ENCODE measurements at regions of chrX and their contacts with region 1.

Region 1: DNA sequence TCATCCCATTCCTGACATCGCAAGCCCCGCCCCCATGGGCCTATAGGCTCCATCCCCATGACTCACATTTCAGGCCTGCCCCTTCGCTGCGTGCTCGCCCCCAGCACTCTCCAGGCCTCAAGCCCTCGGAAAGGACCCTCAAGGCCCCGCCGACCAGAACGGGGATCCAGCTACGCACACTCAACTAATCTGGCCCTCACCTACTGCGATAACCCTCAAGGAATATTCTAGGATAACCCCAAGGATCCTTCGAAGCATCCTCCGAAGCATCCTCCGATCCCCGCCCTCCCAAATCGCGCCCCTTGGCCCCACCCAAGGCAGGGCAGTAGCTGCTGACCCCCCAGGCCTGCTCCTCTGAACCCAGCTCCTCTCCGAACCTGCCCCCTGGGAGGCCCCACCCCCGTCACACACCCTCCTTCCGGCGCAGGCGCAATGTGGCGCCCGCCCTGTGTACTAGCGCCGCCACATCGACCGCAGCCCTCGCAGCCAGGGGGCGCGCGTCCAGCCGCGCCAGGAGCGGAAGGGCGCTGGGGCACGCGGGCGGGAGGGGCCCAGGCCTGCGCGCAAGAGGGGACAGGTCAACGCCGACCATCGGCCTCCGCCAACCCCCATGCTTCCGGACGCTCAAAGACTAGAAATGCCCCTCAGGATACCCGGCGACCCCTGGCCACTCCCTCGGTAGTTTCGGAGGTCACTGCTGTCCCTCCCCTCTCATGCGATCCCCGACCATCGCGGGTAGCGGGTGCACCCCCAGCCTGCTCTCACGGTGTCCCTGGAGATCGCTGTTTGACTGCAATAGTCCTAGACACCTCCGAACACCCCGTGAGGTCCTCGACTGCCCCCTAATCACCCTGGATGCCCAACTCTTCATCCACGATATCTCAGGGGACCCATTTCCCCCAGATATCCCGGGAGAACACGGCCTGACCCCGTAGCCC is 6.4 kb upstream of the MAGIX start:
- DNase-seq: peak; percentile 68 to 90 (median 81)
- ATAC-seq: peak; percentile 92 to 94 (median 93)
- H3K4me3 ChIP-seq: peak overlapping the region; percentile 47 to 63
- H3K4me3 Mint-ChIP-seq: peak overlapping the region; percentile 92 to 93 (median 92)
- H3K27ac ChIP-seq: peak overlapping the region; percentile 90
- H3K27ac Mint-ChIP-seq: peak overlapping the region; percentile 94 to 97
- H3K4me1 ChIP-seq: peaks cover 0 to 18% of the 10 kb centered on the region in 2 experiments
- H3K4me1 Mint-ChIP-seq: peaks cover 15 to 24% (median 16%) of the 10 kb centered on the region in 3 donors
- H3K27me3 ChIP-seq: no peaks in the 10 kb centered on the region
- H3K27me3 Mint-ChIP-seq: no peaks in the 10 kb centered on the region

Region 2: GRCh38 chrX:47543496-47543895 is 1612.7 kb before region 1 on chrX:
- CTCF ChIA-PET with region 1: no interaction called
- POLR2A ChIA-PET with region 1: no interaction called
- DNase-seq: no peak
- ATAC-seq: no peak
- H3K4me3 ChIP-seq: no peak overlapping the region
- H3K4me3 Mint-ChIP-seq: no peak overlapping the region
- H3K27ac ChIP-seq: no peak overlapping the region
- H3K27ac Mint-ChIP-seq: no peak overlapping the region
- H3K4me1 ChIP-seq: no peaks in the 10 kb centered on the region
- H3K4me1 Mint-ChIP-seq: no peaks in the 10 kb centered on the region
- H3K27me3 ChIP-seq: peaks cover 0 to 5% of the 10 kb centered on the region in 2 experiments
- H3K27me3 Mint-ChIP-seq: peaks cover 0 to 4% of the 10 kb centered on the region in 2 donors

Region 3: GRCh38 chrX:49100704-49101628 is 55.2 kb before region 1 on chrX:
- CTCF ChIA-PET with region 1: no interaction called
- POLR2A ChIA-PET with region 1: no interaction called
- DNase-seq: peak; percentile 72 to 93 (median 84)
- ATAC-seq: peak; percentile 92 to 95 (median 94)
- H3K4me3 ChIP-seq: peak overlapping the region; percentile 52 to 65
- H3K4me3 Mint-ChIP-seq: peak overlapping the region; percentile 77 to 87 (median 85)
- H3K27ac ChIP-seq: peak overlapping the region; percentile 73
- H3K27ac Mint-ChIP-seq: peak overlapping the region; percentile 88 to 93
- H3K4me1 ChIP-seq: peaks cover 0 to 17% of the 10 kb centered on the region in 2 experiments
- H3K4me1 Mint-ChIP-seq: peaks cover 0 to 8% (median 0%) of the 10 kb centered on the region in 3 donors
- H3K27me3 ChIP-seq: no peaks in the 10 kb centered on the region
- H3K27me3 Mint-ChIP-seq: peaks cover 0 to 4% of the 10 kb centered on the region in 2 donors

Region 4: DNA sequence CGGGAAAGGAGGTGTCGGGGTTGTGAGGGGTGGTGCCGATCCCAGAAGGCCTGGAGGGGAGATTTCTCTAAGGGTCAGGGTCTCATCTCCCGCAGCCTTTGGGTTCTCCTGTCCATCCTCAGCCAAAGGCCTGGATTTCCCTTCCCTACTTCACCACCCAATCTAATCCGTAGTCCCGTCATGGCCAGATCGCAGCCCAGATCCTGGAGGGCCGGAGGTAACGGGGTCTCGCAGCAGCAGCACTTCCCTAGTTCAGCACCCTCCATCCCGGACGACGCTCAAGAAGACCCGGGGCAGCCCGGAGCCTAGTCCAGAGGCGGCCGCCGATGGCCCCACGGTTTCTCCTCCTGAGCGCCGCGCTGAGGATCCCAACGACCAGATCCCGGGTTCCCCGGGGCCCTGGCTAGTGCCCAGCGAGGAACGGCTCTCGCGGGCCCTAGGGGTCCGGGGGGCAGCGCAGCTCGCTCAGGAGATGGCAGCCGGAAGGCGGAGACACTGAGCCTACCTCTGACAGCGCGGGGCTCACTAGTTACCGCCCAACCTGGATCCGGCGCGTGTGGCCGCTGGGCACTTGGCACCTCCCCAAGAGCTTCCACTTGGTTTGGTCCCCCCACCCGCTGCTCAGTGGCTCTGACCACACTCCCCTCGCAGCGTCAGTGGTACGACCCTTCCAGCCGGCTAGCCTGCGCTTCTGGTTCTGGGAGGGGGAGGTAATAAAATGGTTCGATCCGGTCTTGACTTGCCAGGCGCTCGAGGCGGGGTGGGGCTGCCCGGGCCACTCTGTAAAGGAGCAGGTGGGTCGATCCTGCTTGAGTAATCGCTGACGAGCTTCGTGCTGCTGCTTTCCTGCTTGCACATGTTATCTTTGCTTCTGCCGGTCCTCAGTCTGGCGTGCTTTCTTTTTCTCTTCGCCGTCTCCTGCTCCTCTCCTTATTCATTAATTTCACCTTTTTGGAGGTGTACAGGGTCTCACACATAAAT is 10.0 kb after region 1 on chrX:
- CTCF ChIA-PET with region 1: interaction called in 1 of 2 experiments, 18 read pairs
- POLR2A ChIA-PET with region 1: no interaction called
- DNase-seq: peak; percentile 33 to 79 (median 66)
- ATAC-seq: peak; percentile 61 to 71 (median 63)
- H3K4me3 ChIP-seq: peak overlapping the region; percentile 42 to 46
- H3K4me3 Mint-ChIP-seq: peak overlapping the region; percentile 72 to 86 (median 72)
- H3K27ac ChIP-seq: peak overlapping the region; percentile 86
- H3K27ac Mint-ChIP-seq: peak overlapping the region; percentile 93 to 97
- H3K4me1 ChIP-seq: peaks cover 7 to 49% of the 10 kb centered on the region in 2 experiments
- H3K4me1 Mint-ChIP-seq: peaks cover 29 to 35% (median 34%) of the 10 kb centered on the region in 3 donors
- H3K27me3 ChIP-seq: no peaks in the 10 kb centered on the region
- H3K27me3 Mint-ChIP-seq: no peaks in the 10 kb centered on the region

Region 5: DNA sequence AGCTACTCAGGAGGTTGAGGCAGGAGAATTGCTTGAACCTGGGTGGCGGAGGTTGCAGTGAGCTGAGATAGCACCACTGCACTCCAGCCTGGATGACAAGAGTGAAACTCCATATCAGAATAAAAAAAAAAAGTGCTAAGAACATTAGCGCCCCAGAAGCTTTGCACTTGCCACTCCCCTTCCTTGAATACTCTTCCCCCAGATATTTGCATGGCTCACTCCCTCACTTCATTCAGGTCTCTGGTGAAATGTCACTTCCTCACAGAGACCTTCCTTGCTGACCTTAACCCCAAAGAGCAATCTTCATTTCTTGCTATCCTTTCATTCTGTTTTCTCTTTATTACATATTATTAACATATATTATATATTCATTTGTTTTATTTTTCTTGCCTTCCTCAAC is 65.7 kb after region 1 on chrX:
- CTCF ChIA-PET with region 1: no interaction called
- POLR2A ChIA-PET with region 1: no interaction called
- DNase-seq: no peak
- ATAC-seq: no peak
- H3K4me3 ChIP-seq: no peak overlapping the region
- H3K4me3 Mint-ChIP-seq: no peak overlapping the region
- H3K27ac ChIP-seq: no peak overlapping the region
- H3K27ac Mint-ChIP-seq: no peak overlapping the region
- H3K4me1 ChIP-seq: no peaks in the 10 kb centered on the region
- H3K4me1 Mint-ChIP-seq: peaks cover 0 to 4% (median 0%) of the 10 kb centered on the region in 3 donors
- H3K27me3 ChIP-seq: no peaks in the 10 kb centered on the region
- H3K27me3 Mint-ChIP-seq: peaks cover 3 to 21% of the 10 kb centered on the region in 2 donors